ENCODE measurements at regions of chr1 and their contacts with region 1.

Region 1: DNA sequence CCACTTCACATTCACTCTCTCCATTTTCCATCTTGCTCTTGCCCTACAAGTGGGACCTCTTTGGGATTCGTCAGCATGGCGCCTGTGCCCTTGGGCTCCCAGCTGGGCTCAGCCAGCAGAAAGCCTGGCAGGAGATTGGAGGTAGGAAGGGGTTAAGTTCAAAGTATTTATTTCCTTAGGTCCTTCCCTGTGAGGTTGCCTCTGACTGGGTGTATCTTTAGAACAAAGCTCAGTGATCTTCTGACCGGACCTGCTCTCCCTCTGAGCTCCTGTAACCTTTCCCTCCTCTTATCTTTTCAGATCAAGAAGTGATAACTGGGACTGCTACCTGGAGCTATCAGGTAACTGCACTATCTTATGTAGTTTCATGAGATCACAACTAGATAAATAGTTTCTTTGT is 75.8 kb upstream of the ABCD3 start:
- DNase-seq: no peak
- H3K4me3 ChIP-seq: no peak overlapping the region
- H3K27ac ChIP-seq: no peak overlapping the region
- H3K27me3 ChIP-seq: no peaks in the 10 kb centered on the region
- CTCF ChIP-seq: no peak

Region 2: DNA sequence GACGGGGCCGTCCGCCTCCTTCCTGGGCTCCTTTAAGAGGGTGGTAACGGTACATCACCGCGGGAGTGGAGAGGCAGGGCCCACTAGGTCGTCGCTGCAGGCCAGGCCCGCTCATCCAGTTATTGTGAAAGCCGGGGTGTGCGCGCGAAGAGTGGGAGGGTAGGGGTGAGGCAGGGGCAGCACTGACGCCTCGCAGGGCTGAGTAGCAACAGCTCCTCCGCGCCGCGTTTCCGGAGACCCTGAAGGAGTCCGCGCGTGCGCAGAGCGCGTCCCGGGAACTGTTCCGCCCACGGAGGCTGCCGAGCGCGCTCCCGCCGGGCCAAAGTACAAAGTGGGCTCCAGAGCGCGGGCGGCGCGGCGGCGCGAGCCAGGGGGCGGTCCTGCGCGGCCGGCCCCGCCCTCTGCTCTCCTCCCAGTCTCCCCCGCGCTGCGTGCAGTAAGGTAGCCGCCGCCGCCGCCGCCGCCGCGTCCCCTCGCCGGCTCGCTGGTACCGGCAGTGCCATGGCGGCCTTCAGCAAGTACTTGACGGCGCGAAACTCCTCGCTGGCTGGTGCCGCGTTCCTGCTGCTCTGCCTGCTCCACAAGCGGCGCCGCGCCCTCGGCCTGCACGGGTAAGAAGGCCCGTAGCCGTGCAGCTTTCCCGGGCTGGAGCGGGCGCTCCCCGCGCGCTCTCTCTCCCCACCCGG is 75.7 kb after region 1 on chr1 and contains the start of gene ABCD3:
- intact Hi-C with region 1: loop called in 1 of 2 experiments (anchors 5 kb)
- DNase-seq: peak; percentile 90 to 95 (median 94)
- H3K4me3 ChIP-seq: peak within 1 kb of the TSS; percentile 76 to 99 (median 96)
- H3K27ac ChIP-seq: peak within 1 kb of the TSS; percentile 80 to 99 (median 97)
- H3K27me3 ChIP-seq: no peaks in the 10 kb centered on the region
- CTCF ChIP-seq: peak in 29 of 56 donors; percentile 5 to 62 (median 25)
- total RNA-seq, gene ABCD3: 29.3 to 56.2 (median 39.9) TPM